ENCODE measurements at regions of chr19 and their contacts with region 1.

Region 1: GRCh38 chr19:13794757-13795589 is at the start of gene ZSWIM4:
- DNase-seq: peak; percentile 99 to 100
- H3K4me3 ChIP-seq: peak within 1 kb of the TSS; percentile 76 to 91 (median 81)
- H3K27ac ChIP-seq: peak within 1 kb of the TSS; percentile 97 to 99
- H3K4me1 ChIP-seq: peaks cover 5 to 12% of the 10 kb centered on the region in 2 donors
- H3K27me3 ChIP-seq: no peaks in the 10 kb centered on the region
- CTCF ChIP-seq: no peak
- POLR2A ChIP-seq: peak; percentile 56
- total RNA-seq, gene ZSWIM4: 1.1 to 8.5 (median 6.9) TPM

Region 2: GRCh38 chr19:13833330-13834243 is 38.6 kb after region 1 on chr19:
- intact Hi-C with region 1: loop called (anchors 2 kb)
- DNase-seq: peak; percentile 97 to 99
- H3K4me3 ChIP-seq: peak overlapping the region; percentile 20 to 61 (median 37)
- H3K27ac ChIP-seq: peak overlapping the region; percentile 97 to 100
- H3K4me1 ChIP-seq: peaks cover 20 to 29% of the 10 kb centered on the region in 2 donors
- H3K27me3 ChIP-seq: no peaks in the 10 kb centered on the region
- CTCF ChIP-seq: peak in 2 of 3 donors; percentile 44 to 69
- POLR2A ChIP-seq: peak; percentile 13

Region 3: DNA sequence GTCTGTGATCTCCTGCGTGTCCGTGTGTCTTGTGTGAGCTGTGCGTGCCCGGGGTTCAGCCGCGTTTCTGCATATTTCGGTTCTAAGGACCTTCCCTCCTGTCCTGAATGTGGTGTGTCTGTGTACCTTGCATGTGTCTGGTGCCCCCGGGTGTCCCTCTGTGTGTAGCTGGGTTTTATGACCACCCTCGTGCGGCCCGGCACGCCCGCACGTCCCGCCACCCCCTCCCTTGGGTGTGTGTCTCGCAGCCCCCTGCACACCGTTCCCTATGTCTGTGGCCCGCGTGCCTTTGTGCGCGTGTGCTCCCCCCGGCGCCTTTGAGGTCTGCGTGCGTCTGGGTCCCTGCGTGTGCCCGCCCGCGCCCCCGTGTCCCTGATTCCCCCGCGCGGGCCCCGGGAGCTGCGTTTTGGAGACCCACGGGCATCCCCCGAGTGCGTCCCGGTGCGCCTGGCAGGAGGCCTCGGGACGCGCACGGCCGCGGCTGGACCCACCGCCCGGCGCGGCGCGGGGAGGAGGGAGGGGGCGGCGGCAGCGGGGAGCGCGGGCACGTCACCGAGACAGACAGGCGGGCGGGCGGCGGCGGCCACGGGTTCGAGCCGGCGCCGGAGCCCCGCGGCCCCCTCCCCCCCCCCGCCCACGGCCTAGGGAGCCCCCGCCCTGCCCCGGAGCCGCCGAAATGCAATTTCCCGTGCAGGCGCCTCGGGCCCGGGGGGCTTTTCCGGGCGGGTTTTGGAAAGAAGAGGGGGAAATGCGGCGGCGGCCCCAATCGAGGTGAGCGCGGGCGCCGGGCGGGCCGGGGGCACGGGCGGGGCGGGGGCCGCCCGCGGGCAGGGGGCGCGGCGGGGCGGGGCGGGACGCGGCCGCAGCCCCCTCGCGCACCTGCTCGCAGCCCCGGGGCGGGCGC is 69.9 kb after region 1 on chr19:
- intact Hi-C with region 1: loop called (anchors 1 kb)
- DNase-seq: no peak
- H3K4me3 ChIP-seq: peak overlapping the region; percentile 53 to 97 (median 75)
- H3K27ac ChIP-seq: peak overlapping the region; percentile 76 to 78
- H3K4me1 ChIP-seq: peaks cover 2 to 3% of the 10 kb centered on the region in 2 donors
- H3K27me3 ChIP-seq: no peaks in the 10 kb centered on the region
- CTCF ChIP-seq: no peak
- POLR2A ChIP-seq: no peak

Region 4: GRCh38 chr19:13875824-13876223 is 80.9 kb after region 1 on chr19:
- intact Hi-C with region 1: no loop called
- DNase-seq: no peak
- H3K4me3 ChIP-seq: no peak overlapping the region
- H3K27ac ChIP-seq: no peak overlapping the region
- H3K4me1 ChIP-seq: peaks cover 4 to 12% of the 10 kb centered on the region in 2 donors
- H3K27me3 ChIP-seq: no peaks in the 10 kb centered on the region
- CTCF ChIP-seq: no peak
- POLR2A ChIP-seq: no peak

Measured in breast epithelium (tissue), 4 donors.